ENCODE measurements at regions of chr6 and their contacts with region 1.

Region 1: DNA sequence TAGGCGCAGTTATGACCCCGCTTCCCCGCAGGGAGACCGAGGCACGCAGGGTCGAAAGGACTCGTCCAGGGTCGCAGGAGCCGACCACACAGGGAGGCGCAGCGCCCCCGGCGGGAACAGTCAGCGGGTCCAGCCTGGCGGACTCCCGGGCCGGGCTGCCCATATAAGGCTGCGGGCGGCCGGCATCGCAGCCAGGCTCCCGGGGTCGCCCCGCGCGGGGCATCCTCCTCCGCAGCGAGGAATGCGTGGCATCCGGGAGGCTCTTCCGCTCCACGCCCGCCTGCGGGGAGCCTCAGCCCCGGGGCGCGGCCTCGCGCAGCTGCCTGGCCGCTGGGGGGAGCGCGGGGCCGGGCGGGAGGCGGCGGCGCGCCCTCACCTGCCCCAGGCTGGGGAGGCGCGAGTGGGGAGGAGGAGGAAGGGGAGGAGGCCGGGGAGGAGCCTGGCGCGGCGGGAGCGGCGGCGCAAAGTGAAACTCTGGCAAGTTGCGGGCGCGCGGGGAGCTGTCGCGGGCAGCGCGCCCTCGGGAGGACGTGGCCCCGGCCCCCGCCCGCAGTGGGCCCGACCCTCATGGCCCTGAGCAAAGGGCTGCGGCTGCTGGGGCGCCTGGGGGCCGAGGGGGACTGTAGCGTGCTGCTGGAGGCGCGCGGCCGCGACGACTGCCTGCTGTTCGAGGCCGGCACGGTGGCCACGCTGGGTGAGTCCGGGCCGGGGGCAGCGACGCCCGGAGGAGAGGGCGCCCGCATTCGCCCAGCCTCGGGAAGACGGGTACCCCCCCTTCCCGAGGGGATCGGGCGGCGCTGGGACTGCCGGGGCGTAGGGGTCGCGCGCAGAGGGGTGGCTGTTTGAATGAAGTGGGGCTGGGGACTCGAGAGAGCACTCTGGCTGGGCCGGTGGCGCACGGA is at the start of gene SYNJ2:
- DNase-seq: peak; percentile 73 to 89 (median 87)
- ATAC-seq: peak; percentile 96
- H3K4me3 ChIP-seq: peak within 1 kb of the TSS; percentile 81
- H3K4me3 Mint-ChIP-seq: peak within 1 kb of the TSS; percentile 75 to 94 (median 84)
- H3K27ac ChIP-seq: peak within 1 kb of the TSS; percentile 83
- H3K27ac Mint-ChIP-seq: peak within 1 kb of the TSS; percentile 78 to 95 (median 88)
- H3K4me1 ChIP-seq: peaks cover 27 to 38% of the 10 kb centered on the region in 2 donors
- H3K4me1 Mint-ChIP-seq: peaks cover 26 to 65% (median 55%) of the 10 kb centered on the region in 7 donors
- H3K27me3 ChIP-seq: no peaks in the 10 kb centered on the region
- H3K27me3 Mint-ChIP-seq: no peaks in the 10 kb centered on the region
- total RNA-seq, gene SYNJ2: 22.4 to 36.6 (median 22.5) TPM

Region 2: GRCh38 chr6:157323255-157323965 is 658.2 kb before region 1 on chr6 and contains the start of gene TMEM242:
- CTCF ChIA-PET with region 1: no interaction called
- POLR2A ChIA-PET with region 1: no interaction called
- intact Hi-C with region 1: loop called in 1 of 2 experiments (anchors 2 kb)
- DNase-seq: peak; percentile 68 to 93 (median 81)
- ATAC-seq: peak; percentile 98
- H3K4me3 ChIP-seq: peak within 1 kb of the TSS; percentile 95
- H3K4me3 Mint-ChIP-seq: peak within 1 kb of the TSS; percentile 93 to 99 (median 95)
- H3K27ac ChIP-seq: peak within 1 kb of the TSS; percentile 76
- H3K27ac Mint-ChIP-seq: peak within 1 kb of the TSS; percentile 78 to 93 (median 92)
- H3K4me1 ChIP-seq: peaks cover 8 to 12% of the 10 kb centered on the region in 2 donors
- H3K4me1 Mint-ChIP-seq: peaks cover 10 to 47% (median 24%) of the 10 kb centered on the region in 7 donors
- H3K27me3 ChIP-seq: no peaks in the 10 kb centered on the region
- H3K27me3 Mint-ChIP-seq: peaks cover 0 to 30% (median 10%) of the 10 kb centered on the region in 5 donors
- total RNA-seq, gene TMEM242: 11.6 to 15.6 (median 13.2) TPM

Region 3: GRCh38 chr6:157885211-157885788 is 96.3 kb before region 1 on chr6:
- CTCF ChIA-PET with region 1: no interaction called
- POLR2A ChIA-PET with region 1: no interaction called
- intact Hi-C with region 1: loop called in 1 of 2 experiments (anchors 1 kb)
- DNase-seq: peak in 7 of 9 donors; percentile 74 to 90 (median 86)
- ATAC-seq: peak; percentile 89
- H3K4me3 ChIP-seq: no peak overlapping the region
- H3K4me3 Mint-ChIP-seq: peak overlapping the region; percentile 30 to 78 (median 54)
- H3K27ac ChIP-seq: peak overlapping the region; percentile 93
- H3K27ac Mint-ChIP-seq: peak overlapping the region; percentile 86 to 99 (median 96)
- H3K4me1 ChIP-seq: peaks cover 0 to 33% of the 10 kb centered on the region in 2 donors
- H3K4me1 Mint-ChIP-seq: peaks cover 31 to 92% (median 85%) of the 10 kb centered on the region in 7 donors
- H3K27me3 ChIP-seq: no peaks in the 10 kb centered on the region
- H3K27me3 Mint-ChIP-seq: peaks cover 0 to 3% (median 0%) of the 10 kb centered on the region in 5 donors

Region 4: DNA sequence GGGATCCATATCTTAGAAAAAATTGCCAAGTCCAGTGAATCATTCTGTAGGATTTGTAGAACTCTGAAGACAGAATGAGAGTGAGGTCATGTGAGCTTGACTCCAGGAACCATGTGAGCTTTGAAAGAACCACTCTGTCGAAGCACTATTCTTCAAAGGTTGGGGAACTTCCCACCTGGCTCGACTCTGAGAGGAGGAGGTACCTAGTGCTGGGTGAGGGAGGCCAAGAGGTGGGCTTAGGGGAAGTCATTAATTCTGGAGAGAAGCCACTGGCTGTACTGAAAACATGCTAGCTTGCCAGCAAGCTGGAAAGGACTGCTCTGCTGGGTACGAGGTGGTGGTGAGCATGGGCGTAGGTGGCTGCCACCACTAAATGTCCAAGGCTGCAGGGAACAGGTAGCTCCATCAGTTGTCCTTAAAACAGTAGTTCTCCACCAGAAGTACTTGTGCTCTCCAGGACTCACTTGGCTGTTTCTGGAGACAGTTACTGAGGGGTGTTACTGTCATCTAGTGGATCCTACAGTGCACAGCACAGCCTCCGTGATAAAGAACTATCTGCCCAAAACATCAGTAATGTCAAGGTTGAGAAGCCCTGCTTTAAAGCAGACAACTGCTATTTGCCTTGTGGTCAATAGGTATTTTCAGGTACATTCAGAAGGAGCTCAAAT is 34.6 kb before region 1 on chr6:
- CTCF ChIA-PET with region 1: no interaction called
- POLR2A ChIA-PET with region 1: no interaction called
- intact Hi-C with region 1: loop called in 1 of 2 experiments (anchors 5 kb)
- DNase-seq: peak in 6 of 9 donors; percentile 11 to 51 (median 32)
- ATAC-seq: peak; percentile 72
- H3K4me3 ChIP-seq: no peak overlapping the region
- H3K4me3 Mint-ChIP-seq: peak overlapping the region in 1 of 10 donors; percentile 42
- H3K27ac ChIP-seq: no peak overlapping the region
- H3K27ac Mint-ChIP-seq: peak overlapping the region in 8 of 9 donors; percentile 8 to 88 (median 52)
- H3K4me1 ChIP-seq: no peaks in the 10 kb centered on the region
- H3K4me1 Mint-ChIP-seq: peaks cover 0 to 24% (median 5%) of the 10 kb centered on the region in 7 donors
- H3K27me3 ChIP-seq: no peaks in the 10 kb centered on the region
- H3K27me3 Mint-ChIP-seq: peaks cover 0 to 20% (median 0%) of the 10 kb centered on the region in 5 donors

Region 5: DNA sequence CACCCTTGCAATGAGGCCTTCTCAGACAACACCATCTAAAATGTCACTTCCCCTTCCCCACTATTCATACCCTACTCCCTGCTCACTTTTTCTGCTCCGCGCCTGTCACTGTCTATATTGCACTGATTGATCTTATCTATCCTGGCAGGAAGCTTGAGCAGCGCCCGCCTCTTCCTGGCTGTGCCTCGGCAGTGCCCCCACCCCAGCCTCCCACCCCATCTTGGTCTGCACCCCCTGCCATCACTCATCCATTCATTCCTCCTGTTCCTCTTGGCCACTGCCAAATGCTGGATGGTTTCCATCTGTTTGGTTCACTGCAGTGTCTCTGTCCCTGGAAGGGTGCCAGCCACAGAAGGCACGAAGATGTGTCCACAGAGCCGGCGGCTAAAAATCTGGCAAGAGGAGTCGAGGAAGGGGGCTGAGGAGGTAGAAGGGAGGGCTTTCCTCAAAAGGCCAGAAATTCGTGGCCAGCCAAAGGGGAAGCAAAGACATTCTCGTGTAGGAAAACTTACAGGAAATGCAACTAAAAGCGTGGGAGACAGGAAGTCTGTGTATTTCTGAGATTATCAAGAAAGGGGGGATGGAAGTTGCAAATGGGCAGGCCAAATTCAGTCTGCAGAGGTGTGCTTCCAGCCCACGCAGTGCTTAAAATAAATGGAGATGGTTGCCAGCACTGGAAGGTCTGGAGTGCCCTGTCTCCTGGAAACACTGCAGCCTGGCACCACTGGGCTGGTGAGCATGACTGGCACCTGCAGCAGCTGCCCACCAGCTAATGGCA is 27.7 kb after region 1 on chr6:
- CTCF ChIA-PET with region 1: no interaction called
- POLR2A ChIA-PET with region 1: interaction called, 13 read pairs
- intact Hi-C with region 1: loop called in 1 of 2 experiments (anchors 1 kb)
- DNase-seq: peak in 7 of 9 donors; percentile 19 to 53 (median 41)
- ATAC-seq: peak; percentile 54
- H3K4me3 ChIP-seq: peak overlapping the region; percentile 43
- H3K4me3 Mint-ChIP-seq: peak overlapping the region; percentile 70 to 85 (median 80)
- H3K27ac ChIP-seq: peak overlapping the region; percentile 56
- H3K27ac Mint-ChIP-seq: peak overlapping the region; percentile 76 to 97 (median 91)
- H3K4me1 ChIP-seq: peaks cover 18 to 57% of the 10 kb centered on the region in 2 donors
- H3K4me1 Mint-ChIP-seq: peaks cover 62 to 94% (median 85%) of the 10 kb centered on the region in 7 donors
- H3K27me3 ChIP-seq: no peaks in the 10 kb centered on the region
- H3K27me3 Mint-ChIP-seq: no peaks in the 10 kb centered on the region

Region 6: GRCh38 chr6:158168040-158168289 is 186.3 kb after region 1 on chr6 and contains the start of gene SERAC1:
- CTCF ChIA-PET with region 1: no interaction called
- POLR2A ChIA-PET with region 1: interaction called, 3 read pairs
- intact Hi-C with region 1: loop called in 1 of 2 experiments (anchors 1 kb)
- DNase-seq: no peak
- ATAC-seq: peak; percentile 59
- H3K4me3 ChIP-seq: peak within 1 kb of the TSS; percentile 88
- H3K4me3 Mint-ChIP-seq: peak within 1 kb of the TSS; percentile 81 to 96 (median 96)
- H3K27ac ChIP-seq: peak within 1 kb of the TSS; percentile 96
- H3K27ac Mint-ChIP-seq: peak within 1 kb of the TSS; percentile 90 to 99 (median 98)
- H3K4me1 ChIP-seq: peaks cover 0 to 5% of the 10 kb centered on the region in 2 donors
- H3K4me1 Mint-ChIP-seq: peaks cover 14 to 46% (median 27%) of the 10 kb centered on the region in 7 donors
- H3K27me3 ChIP-seq: no peaks in the 10 kb centered on the region
- H3K27me3 Mint-ChIP-seq: no peaks in the 10 kb centered on the region
- total RNA-seq, gene SERAC1: 2.4 to 5.4 (median 4.6) TPM

Measured in naive thymus-derived CD4-positive, alpha-beta T cell (primary cell).